Right ventricle myocardium inferior (tissue), 1 donor: ENCODE measurements at regions of chr19 and their contacts with region 1.

Region 1: GRCh38 chr19:51338563-51339312 is 3.2 kb downstream of the VSIG10L start:
- DNase-seq: peak; percentile 91
- ATAC-seq: peak; percentile 72

Region 2: GRCh38 chr19:51393959-51394836 is 55.5 kb after region 1 on chr19:
- intact Hi-C with region 1: loop called (anchors 2 kb)
- DNase-seq: peak; percentile 95
- ATAC-seq: peak; percentile 98

Region 3: GRCh38 chr19:51422053-51422448 is 83.3 kb after region 1 on chr19:
- intact Hi-C with region 1: no loop called
- DNase-seq: peak; percentile 95
- ATAC-seq: peak; percentile 70

Region 4: GRCh38 chr19:51439021-51439465 is 100.3 kb after region 1 on chr19:
- intact Hi-C with region 1: loop called (anchors 2 kb)
- DNase-seq: no peak
- ATAC-seq: no peak

Region 5: DNA sequence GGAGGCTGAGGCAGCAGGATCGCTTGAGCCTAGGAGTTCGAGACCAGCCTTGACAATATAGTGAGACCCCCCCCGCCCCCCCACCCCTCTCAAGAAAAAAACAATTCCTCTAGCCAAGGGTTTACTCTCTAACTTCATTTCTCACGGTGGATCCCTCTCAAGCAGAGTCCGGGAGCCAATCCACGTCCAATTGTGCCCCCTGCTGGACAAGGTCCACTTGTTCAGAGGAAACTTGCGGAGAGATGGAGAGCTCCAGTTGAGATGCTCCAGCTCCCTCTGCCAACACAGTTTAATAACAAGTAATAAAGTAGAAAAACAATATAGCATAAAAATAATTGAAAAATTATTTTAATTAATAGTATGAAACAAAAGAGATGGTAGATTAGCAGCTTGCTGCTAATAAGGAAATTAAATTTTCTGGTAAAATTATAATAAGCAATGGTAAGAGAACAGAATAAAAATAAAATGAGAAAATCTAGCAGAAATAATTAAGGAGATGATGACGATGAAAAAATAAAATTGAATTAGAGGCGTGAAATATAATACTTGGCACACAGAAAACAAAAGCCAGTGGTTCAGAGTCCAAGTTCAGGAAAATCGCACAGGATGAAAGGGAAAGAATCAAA is 322.4 kb after region 1 on chr19:
- intact Hi-C with region 1: loop called (anchors 2 kb)
- DNase-seq: no peak
- ATAC-seq: no peak